AG04449 (cell line): ENCODE measurements at regions of chr21 and their contacts with region 1.

Region 1: DNA sequence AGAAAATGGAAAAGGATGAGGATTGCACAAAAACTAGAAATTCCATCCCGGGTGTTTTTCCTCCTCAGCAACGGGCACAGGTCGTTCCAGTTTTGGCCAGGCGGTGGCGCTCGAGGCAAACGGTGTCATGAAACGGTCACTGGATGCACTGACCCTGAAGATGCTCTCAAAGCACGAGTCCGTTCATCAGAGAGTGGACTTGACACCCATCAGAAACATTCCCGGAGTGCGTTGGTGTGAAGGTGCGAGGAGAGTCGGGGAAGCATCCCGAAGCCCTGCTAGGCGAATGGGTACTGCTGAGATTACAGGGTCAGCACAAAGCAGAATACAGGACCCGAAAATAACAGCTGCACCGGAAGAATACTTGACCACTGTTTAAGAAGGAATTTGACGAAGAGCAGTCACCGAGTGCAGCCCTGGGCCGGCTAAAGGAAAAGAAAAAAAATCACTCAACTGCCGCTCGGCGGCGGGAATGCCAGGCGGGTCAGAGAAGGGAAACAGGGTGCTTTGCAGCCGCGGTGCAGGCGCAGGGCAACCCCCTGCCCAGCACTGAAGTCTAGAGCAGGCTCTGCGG is 71.7 kb upstream of the ETS2 start:
- DNase-seq: peak; percentile 5
- H3K4me3 ChIP-seq: peak overlapping the region; percentile 55
- CTCF ChIP-seq: peak; percentile 95

Region 2: GRCh38 chr21:38506661-38507281 is 227.3 kb before region 1 on chr21:
- CTCF ChIA-PET with region 1: no interaction called
- POLR2A ChIA-PET with region 1: no interaction called
- DNase-seq: no peak
- H3K4me3 ChIP-seq: no peak overlapping the region
- CTCF ChIP-seq: no peak

Region 3: GRCh38 chr21:38712071-38712470 is 22.0 kb before region 1 on chr21:
- CTCF ChIA-PET with region 1: no interaction called
- POLR2A ChIA-PET with region 1: no interaction called
- DNase-seq: no peak
- H3K4me3 ChIP-seq: no peak overlapping the region
- CTCF ChIP-seq: peak; percentile 49

Region 4: DNA sequence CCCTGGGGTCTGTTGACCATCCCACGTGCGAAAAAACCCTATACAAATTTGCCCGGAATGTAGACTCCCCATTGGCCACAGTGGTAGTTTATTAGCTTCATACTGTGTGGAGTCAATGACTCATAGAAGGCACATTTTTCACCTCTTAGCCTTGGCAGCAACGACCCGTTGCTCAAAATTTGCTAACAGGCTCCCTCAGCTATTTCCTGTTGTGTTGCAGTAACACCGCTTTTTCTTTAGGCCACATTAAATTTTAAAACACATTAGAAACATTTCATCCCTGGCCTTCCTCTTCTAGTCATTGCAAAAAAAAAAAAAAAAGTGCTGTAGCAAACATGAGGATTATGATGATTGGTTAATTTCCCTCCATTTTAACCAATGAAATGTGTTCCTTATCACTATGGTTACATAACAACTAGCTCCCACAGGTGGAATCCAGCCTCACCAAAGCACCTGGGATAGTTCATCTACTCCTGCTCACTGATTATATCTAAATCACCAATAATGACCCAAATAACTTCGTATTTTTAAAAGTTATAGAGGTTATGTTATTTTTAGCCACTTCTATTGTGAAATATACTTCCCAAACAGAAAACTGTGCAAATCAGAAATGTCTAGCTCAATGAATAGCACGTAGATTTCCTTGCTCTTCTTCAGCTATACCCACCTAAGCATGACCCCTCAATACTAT is 21.8 kb after region 1 on chr21:
- CTCF ChIA-PET with region 1: interaction called, 12 read pairs
- POLR2A ChIA-PET with region 1: no interaction called
- DNase-seq: peak; percentile 90
- H3K4me3 ChIP-seq: no peak overlapping the region
- CTCF ChIP-seq: no peak

Region 5: DNA sequence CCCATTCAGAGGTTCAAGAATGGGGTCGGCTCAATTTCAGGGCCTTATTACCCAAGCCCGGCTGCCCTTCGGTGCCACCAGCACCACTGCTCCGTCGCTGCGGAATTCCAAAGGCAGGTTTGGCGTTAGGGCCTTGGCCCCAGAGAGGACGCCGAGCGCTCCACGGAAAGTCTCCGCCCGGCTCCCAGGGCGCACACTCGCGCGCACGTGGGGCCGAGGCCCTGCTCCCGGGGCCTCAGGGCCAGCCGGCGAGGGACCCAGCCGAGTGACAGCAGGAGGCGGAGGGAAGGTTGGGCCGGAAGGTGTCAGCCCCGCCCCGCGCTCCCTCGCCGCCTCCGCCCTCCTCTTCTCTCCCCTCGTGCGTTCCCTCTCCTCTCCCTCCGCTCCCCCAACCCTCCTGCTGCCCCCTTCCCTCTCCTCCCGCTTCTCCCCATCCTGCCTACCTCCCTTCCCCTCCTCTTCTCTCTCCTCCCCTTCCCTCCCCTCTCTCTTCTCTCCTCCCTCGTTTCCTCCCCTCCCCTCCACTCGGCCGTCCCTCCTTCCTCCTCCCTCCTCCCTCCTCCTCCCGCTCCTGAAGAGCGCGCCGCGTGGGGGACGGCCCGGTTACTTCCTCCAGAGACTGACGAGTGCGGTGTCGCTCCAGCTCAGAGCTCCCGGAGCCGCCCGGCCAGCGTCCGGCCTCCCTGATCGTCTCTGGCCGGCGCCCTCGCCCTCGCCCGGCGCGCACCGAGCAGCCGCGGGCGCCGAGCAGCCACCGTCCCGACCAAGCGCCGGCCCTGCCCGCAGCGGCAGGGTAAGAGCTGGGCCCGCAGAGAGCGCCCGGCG is 71.5 kb after region 1 on chr21 and contains the start of gene ETS2:
- CTCF ChIA-PET with region 1: interaction called, 10 read pairs
- POLR2A ChIA-PET with region 1: no interaction called
- DNase-seq: peak; percentile 57
- H3K4me3 ChIP-seq: peak within 1 kb of the TSS; percentile 80
- CTCF ChIP-seq: peak; percentile 22

Region 6: DNA sequence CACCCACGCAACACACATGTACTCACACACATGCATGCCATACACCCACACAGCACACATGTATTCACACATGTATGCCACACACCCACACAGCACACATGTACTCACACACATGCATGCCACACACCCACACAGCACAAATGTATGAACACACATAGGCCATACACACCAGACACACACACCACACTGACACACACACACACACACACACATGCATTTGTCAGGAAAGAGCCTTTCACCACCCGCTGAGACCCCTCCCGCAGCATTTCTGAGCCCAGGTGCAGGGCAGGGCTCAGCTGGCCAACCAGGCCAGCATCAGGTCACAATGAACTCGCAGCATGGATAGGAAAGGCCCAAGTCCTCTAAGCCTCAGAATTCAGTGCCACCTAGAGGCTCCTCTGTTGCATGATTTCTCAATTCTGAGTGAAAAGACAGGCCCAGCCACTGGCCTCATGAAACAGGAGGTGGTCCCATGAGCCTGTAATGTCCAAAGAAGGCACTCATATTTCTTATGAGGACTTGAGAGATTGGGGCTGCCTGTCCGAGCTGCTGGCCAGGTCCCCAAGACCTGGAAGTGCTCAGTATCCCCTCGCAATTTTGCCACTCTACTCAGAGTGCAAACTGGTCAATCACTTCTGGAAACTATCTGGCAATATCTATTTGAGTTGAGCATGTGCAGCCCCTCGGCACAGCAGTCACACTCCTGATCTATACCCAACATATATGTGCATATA is 391.9 kb after region 1 on chr21:
- CTCF ChIA-PET with region 1: interaction called, 52 read pairs
- POLR2A ChIA-PET with region 1: no interaction called
- DNase-seq: no peak
- H3K4me3 ChIP-seq: no peak overlapping the region
- CTCF ChIP-seq: peak; percentile 74